Pancreas (tissue), 10 donors: ENCODE measurements at regions of chr10 and their contacts with region 1.

Region 1: GRCh38 chr10:13184730-13185514 is 23.6 kb downstream of the MCM10 start:
- DNase-seq: peak in 3 of 6 donors; percentile 11 to 33 (median 22)
- ATAC-seq: peak; percentile 35 to 82 (median 72)
- H3K4me3 ChIP-seq: no peak overlapping the region
- H3K27ac ChIP-seq: no peak overlapping the region
- H3K4me1 ChIP-seq: no peaks in the 10 kb centered on the region
- H3K27me3 ChIP-seq: no peaks in the 10 kb centered on the region
- CTCF ChIP-seq: no peak

Region 2: DNA sequence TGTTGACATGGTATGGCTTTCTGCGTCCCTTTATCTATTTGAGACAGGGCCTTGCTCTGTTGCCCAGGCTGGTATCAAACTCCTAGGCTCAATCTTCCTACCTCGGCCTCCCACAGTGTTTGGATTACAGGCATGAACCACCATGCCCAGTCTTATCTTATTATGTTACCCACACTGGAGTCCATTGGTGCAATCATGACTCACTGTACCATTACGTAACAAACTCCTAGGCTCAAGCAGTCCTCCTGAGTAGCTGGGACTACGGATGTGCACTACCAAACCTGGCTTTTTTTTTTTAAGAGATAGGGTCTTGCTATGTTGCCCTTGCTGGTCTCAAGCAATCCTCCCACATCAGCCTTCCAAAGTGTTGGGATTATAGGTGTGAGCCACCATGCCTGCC is 250.1 kb before region 1 on chr10:
- intact Hi-C with region 1: no loop called
- DNase-seq: no peak
- ATAC-seq: no peak
- H3K4me3 ChIP-seq: no peak overlapping the region
- H3K27ac ChIP-seq: no peak overlapping the region
- H3K4me1 ChIP-seq: no peaks in the 10 kb centered on the region
- H3K27me3 ChIP-seq: no peaks in the 10 kb centered on the region
- CTCF ChIP-seq: no peak

Region 3: GRCh38 chr10:13390604-13391522 is 205.9 kb after region 1 on chr10:
- intact Hi-C with region 1: loop called in 1 of 3 experiments (anchors 5 kb)
- DNase-seq: no peak
- ATAC-seq: peak in 2 of 4 donors; percentile 14 to 17
- H3K4me3 ChIP-seq: no peak overlapping the region
- H3K27ac ChIP-seq: no peak overlapping the region
- H3K4me1 ChIP-seq: no peaks in the 10 kb centered on the region
- H3K27me3 ChIP-seq: no peaks in the 10 kb centered on the region
- CTCF ChIP-seq: no peak

Region 4: GRCh38 chr10:13956826-13957225 is 771.9 kb after region 1 on chr10:
- intact Hi-C with region 1: no loop called
- DNase-seq: peak in 2 of 6 donors; percentile 19 to 22
- ATAC-seq: peak in 3 of 4 donors; percentile 48 to 68 (median 67)
- H3K4me3 ChIP-seq: no peak overlapping the region
- H3K27ac ChIP-seq: no peak overlapping the region
- H3K4me1 ChIP-seq: no peaks in the 10 kb centered on the region
- H3K27me3 ChIP-seq: no peaks in the 10 kb centered on the region
- CTCF ChIP-seq: no peak